MCF 10A (cell line): ENCODE measurements at regions of chr7 and their contacts with region 1.

Region 1: GRCh38 chr7:152436111-152436930 is 518 bp upstream of the KMT2C start:
- DNase-seq: peak; percentile 90
- H3K4me3 Mint-ChIP-seq: peak overlapping the region; percentile 88
- H3K27ac Mint-ChIP-seq: peak overlapping the region; percentile 66
- H3K4me1 Mint-ChIP-seq: peaks cover 16% of the 10 kb centered on the region
- H3K27me3 Mint-ChIP-seq: no peaks in the 10 kb centered on the region
- CTCF ChIP-seq: no peak

Region 2: DNA sequence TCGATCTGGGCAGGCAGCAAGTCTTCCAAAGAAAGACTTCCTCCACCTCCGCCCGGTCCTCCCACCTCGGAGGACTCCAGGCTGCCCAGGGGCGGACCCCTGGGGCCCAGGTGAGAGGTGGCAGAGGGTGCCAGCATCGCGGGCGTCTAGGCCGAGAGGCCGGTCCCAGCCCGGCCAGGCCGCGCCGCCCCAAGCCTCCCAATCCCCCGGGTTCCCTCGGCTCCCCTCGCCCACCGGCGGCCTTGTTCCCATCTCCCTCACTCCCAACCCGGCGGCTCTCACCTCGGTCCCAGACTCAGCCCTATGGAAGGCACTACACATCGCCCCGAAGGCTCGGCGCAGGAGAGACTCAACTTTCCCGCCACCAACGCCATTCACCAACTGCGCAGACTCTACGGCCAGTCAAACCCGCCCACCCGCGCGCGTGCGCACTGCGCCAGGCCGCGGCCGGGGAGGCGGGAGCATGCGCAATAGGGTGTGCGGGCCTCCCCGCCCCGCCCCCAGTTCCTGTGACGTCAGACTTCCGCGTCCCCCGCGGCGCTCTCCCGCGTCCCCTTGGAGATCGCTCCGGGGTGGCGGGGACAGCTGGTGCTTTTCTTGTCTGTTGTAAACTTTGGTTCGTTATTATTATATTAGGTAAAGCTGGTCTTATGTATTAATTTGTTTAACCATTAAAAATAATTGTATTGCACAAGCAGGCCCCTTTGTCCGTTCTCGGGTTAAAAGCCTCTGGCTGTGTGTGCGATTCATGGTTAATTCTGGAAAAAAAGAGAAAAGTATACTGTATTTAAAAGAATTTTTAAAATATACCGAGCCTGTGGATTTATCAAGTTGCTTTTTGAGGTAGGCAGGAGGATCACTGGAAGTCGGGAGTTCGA is 239.7 kb after region 1 on chr7 and contains the start of gene XRCC2:
- CTCF ChIA-PET with region 1: interaction called, 3 read pairs
- POLR2A ChIA-PET with region 1: no interaction called
- intact Hi-C with region 1: loop called (anchors 5 kb)
- DNase-seq: peak; percentile 94
- H3K4me3 Mint-ChIP-seq: peak within 1 kb of the TSS; percentile 81
- H3K27ac Mint-ChIP-seq: peak within 1 kb of the TSS; percentile 74
- H3K4me1 Mint-ChIP-seq: peaks cover 7% of the 10 kb centered on the region
- H3K27me3 Mint-ChIP-seq: no peaks in the 10 kb centered on the region
- CTCF ChIP-seq: no peak
- total RNA-seq, gene XRCC2: 4.1 and 5.2 TPM in 2 replicates